WTC11 (cell line): ENCODE measurements at regions of chr3 and their contacts with region 1.

Region 1: DNA sequence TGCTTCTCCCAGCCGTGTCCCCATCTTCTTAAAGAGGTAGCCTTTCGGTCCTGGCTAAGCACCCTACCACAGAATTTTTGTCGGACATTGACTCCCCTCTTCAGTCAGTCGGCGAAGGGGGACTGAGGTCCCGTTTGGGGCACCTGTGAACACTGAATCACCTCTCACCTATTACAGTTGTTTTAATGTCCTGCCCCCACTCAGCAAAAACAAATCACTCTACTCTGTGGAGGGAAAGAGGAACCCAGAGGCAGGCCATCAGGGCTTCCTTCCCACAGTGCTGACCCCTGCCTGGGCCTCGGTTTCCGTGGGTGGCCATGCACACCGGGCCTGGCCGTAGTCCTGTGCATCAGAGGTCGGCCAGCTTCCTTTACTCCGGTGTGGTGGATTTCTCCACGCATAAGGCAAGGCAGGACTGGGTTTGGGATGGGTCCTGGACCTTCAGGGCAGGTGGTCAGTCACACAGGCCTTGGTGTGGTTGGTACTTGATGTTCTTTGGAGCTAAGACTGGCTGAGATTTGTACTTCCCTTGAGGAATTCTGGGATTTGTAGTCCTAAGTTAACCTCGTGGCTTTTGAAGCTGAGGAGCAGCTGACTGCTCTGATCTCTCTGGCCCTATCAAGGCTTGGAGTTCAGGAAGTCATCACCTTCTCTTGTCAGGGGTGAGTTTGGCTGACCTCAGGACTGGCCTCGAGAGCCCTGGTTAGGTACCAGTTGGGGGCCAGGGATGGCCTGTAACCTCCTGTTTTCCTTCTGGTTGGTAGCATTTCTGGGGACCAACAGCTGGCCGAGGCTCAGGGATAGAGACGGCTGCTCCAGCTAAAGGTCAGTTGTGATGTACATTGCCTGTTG is 627 bp upstream of the FAM131A start:
- DNase-seq: no peak
- ATAC-seq: peak; percentile 6
- H3K4me3 Mint-ChIP-seq: peak overlapping the region; percentile 92
- H3K27ac Mint-ChIP-seq: peak overlapping the region; percentile 93
- H3K4me1 Mint-ChIP-seq: peaks cover 40% of the 10 kb centered on the region
- H3K27me3 Mint-ChIP-seq: no peaks in the 10 kb centered on the region
- CTCF ChIP-seq: no peak

Region 2: DNA sequence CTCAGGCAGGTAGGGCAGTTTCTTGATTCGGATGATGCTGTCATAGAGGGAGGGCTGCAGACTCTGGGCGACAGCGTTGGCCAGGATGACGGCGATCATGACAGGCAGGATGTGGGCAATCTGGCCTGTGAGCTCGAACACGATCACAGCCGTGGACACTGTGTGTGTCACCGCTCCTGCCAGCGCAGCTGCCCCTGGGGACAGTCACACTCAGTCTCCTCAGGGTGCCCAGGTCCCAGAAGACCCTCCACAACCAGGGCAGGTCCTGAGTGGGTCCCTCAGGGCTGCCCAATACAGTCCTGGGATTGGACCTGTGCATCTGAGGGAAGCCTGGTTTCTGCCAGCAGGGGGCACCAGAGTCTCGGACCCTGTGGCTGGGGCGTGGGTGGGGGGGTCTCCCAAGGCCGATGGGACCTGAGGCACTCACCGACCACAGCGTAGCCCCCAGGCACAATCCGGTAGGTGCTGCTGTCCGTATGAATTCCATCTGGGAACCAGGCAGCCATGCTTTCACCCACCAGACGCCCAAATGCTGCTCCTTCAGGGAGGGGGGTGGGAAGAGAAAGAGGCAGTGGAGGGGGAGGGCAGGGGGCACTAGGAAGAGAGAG is 17.5 kb after region 1 on chr3:
- CTCF ChIA-PET with region 1: interaction called, 16 read pairs
- POLR2A ChIA-PET with region 1: interaction called, 3 read pairs
- DNase-seq: peak; percentile 74
- ATAC-seq: peak; percentile 72
- H3K4me3 Mint-ChIP-seq: no peak overlapping the region
- H3K27ac Mint-ChIP-seq: no peak overlapping the region
- H3K4me1 Mint-ChIP-seq: peaks cover 12% of the 10 kb centered on the region
- H3K27me3 Mint-ChIP-seq: no peaks in the 10 kb centered on the region
- CTCF ChIP-seq: peak; percentile 67

Region 3: DNA sequence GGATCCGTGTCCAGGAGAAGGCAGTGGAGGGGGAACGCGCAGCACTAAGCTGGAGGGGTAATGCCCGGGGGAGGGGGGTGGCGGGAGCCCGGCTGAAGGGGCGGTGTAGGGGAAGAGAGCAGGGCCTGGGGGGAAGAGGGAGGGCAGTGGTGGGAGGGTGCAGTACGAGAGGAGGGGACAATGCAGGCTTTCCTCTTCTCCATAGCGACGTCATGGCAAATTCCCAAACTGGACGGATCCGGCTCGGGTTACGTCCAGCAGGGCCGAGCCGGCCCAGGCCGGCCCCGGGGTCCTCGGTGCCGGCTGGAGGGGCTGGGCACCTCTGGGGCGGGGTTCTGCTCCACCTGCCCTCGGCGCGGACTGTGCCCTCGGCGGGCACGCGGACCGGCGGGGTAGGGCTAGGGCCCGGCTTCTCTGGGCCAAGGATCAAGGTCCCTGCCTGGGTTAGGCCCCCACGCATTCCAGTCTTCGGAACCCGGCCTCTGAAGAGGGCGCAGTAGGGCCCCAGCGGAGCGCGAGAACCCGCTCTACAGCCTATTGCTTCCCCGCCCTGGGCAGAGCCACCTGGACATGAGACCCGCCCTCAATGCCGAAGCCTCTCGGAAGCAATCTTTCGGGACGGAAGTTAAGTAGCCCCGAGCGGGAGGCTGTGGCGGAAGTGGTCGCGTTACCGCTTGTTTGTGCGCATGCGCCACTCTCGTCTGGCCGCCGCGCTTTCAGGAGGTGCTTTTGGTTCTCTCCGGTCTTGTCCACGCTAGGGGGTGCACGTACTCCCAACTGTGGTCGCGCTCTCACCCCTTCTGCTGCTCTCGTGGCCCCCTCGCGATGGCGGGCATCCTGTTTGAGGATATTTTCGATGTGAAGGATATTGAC is 26.1 kb after region 1 on chr3:
- CTCF ChIA-PET with region 1: interaction called, 9 read pairs
- POLR2A ChIA-PET with region 1: interaction called, 13 read pairs
- DNase-seq: peak; percentile 97
- ATAC-seq: peak; percentile 83
- H3K4me3 Mint-ChIP-seq: peak overlapping the region; percentile 98
- H3K27ac Mint-ChIP-seq: peak overlapping the region; percentile 99
- H3K4me1 Mint-ChIP-seq: peaks cover 24% of the 10 kb centered on the region
- H3K27me3 Mint-ChIP-seq: peaks cover 6% of the 10 kb centered on the region; the same call in 1 of the 2 replicates
- CTCF ChIP-seq: peak; percentile 12; the same call in 1 of the 2 replicates